PC-3 (cell line): ENCODE measurements at regions of chrX and their contacts with region 1.

Region 1: DNA sequence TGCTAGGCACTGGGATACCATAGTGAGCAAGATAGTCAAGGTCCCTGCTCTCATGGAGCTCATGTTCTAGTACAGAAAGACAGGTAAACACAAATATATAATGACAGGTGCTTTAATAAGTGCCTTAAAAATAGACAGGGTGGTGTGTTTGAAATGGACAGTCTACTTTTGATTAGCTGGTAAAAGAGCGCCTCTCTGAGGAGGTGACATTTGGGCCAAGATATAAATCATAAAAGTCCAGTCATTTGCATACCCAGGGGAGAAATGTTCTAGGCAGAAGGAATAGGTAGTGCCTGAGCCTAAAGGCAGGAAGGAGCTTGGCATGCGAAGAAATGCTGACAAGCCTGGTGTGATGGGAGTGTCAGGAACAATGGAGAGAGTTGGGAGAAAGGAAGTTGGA is 83.6 kb downstream of the DNAAF6 start:
- DNase-seq: peak; percentile 3
- ATAC-seq: no peak
- H3K4me3 ChIP-seq: no peak overlapping the region
- H3K27ac ChIP-seq: no peak overlapping the region
- H3K4me1 ChIP-seq: no peaks in the 10 kb centered on the region
- H3K27me3 ChIP-seq: no peaks in the 10 kb centered on the region
- CTCF ChIP-seq: no peak

Region 2: GRCh38 chrX:107025545-107025944 is 264.5 kb before region 1 on chrX:
- CTCF ChIA-PET with region 1: no interaction called
- POLR2A ChIA-PET with region 1: no interaction called
- intact Hi-C with region 1: loop called (anchors 10 kb)
- DNase-seq: peak; percentile 56
- ATAC-seq: peak; percentile 69
- H3K4me3 ChIP-seq: no peak overlapping the region
- H3K27ac ChIP-seq: no peak overlapping the region
- H3K4me1 ChIP-seq: no peaks in the 10 kb centered on the region
- H3K27me3 ChIP-seq: no peaks in the 10 kb centered on the region
- CTCF ChIP-seq: peak; percentile 81

Region 3: GRCh38 chrX:107146670-107147069 is 143.3 kb before region 1 on chrX:
- CTCF ChIA-PET with region 1: no interaction called
- POLR2A ChIA-PET with region 1: interaction called, 10 read pairs
- intact Hi-C with region 1: no loop called
- DNase-seq: peak; percentile 4
- ATAC-seq: no peak
- H3K4me3 ChIP-seq: no peak overlapping the region
- H3K27ac ChIP-seq: no peak overlapping the region
- H3K4me1 ChIP-seq: no peaks in the 10 kb centered on the region
- H3K27me3 ChIP-seq: no peaks in the 10 kb centered on the region
- CTCF ChIP-seq: no peak

Region 4: DNA sequence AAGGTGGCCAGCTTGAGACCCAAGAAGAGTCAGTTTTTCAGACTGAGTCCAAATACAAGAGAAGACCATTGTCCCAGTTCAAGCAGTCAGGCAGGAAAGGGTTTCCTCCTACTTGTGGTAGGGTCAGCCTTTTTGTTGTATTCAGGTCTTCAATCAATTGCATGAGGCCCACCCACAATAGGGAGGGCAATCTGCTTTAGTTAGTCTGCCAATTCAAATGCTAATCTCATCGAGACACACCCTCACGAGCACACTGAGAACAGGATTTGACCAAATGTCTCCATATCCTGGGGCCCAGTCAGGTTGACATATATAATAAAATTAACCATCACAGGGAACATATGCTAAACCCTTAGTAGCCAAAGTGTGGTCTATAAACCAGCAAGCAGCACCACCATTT is 84.1 kb after region 1 on chrX:
- CTCF ChIA-PET with region 1: no interaction called
- POLR2A ChIA-PET with region 1: no interaction called
- intact Hi-C with region 1: no loop called
- DNase-seq: no peak
- ATAC-seq: no peak
- H3K4me3 ChIP-seq: no peak overlapping the region
- H3K27ac ChIP-seq: no peak overlapping the region
- H3K4me1 ChIP-seq: no peaks in the 10 kb centered on the region
- H3K27me3 ChIP-seq: no peaks in the 10 kb centered on the region
- CTCF ChIP-seq: no peak

Region 5: DNA sequence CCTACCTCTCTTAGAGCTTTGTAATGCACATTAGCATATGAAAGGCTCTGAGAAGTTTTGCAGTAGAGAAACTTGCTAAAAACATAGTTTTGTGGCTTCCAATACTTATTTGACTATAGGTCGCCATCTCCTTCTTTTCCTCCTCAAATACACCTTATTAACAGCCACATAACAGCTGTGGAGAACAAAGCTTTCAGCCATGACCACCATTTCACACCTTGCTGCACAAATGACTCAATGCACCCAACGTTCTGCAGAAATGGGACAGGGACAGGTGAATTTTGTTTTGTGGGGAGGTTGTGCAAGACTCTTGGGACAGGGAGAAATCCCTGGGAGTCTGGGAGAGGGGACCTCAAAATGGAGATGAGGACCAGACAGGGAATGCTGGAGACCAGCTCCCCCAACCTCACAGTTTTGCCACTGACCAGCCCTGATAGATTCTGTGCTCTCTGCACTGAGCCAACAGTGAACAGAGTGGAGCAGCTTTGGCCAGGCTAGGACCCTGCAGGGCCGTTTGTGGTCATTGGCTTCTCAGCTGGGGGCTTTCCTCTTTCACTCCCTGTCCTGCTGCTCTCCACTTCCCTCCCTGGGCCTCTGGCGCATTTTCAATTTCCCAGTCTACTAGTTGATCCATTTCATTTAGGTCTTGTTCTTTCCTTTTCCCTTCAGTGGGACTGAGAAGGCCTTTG is 176.1 kb after region 1 on chrX:
- CTCF ChIA-PET with region 1: no interaction called
- POLR2A ChIA-PET with region 1: no interaction called
- intact Hi-C with region 1: no loop called
- DNase-seq: no peak
- ATAC-seq: no peak
- H3K4me3 ChIP-seq: no peak overlapping the region
- H3K27ac ChIP-seq: no peak overlapping the region
- H3K4me1 ChIP-seq: no peaks in the 10 kb centered on the region
- H3K27me3 ChIP-seq: no peaks in the 10 kb centered on the region
- CTCF ChIP-seq: no peak